ENCODE measurements at regions of chr14 and their contacts with region 1.

Region 1: DNA sequence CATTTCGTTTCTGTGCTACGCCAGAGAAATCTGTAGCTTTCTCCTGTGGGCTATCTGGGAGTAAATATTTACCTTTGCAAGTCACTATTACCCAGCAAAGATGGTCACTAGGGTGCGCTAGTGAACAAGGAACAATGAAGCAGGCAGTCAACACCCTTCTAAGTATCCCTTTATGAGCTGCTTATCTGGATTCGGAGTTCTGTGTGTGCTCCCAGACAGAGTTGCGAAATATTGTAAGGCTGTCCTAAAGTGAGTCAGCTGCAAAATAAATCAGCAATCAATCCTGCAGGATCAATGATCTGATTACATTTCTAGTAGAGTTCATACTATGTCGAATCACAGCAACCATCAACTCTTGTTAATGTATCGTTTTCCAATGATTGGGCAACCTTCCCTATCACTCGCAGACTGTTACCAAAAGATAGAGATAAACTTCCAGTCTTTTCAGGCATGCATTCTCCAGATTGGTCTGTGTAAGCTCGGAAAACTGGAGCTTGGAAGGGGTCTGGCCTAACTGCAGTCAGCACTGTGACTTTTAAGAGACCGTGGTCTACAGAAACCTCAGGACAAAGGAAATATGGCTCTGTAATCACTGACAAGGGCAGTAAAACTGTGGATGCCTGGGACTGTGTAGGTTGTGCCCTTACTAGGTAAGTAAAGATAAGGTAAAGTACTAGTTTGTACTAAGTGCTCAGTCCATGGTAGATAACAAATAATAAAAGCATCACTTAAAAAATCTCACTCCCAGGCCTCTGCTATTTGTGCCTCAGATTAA is 133.5 kb downstream of the KCNK10 start:
- DNase-seq: peak; percentile 77
- H3K4me3 ChIP-seq: no peak overlapping the region
- H3K27ac ChIP-seq: no peak overlapping the region
- H3K4me1 ChIP-seq: no peaks in the 10 kb centered on the region
- H3K27me3 ChIP-seq: no peaks in the 10 kb centered on the region
- CTCF ChIP-seq: peak; percentile 73 to 80

Region 2: GRCh38 chr14:88013750-88014349 is 175.8 kb before region 1 on chr14:
- CTCF ChIA-PET with region 1: no interaction called
- dilution Hi-C with region 1: no loop called
- in situ Hi-C with region 1: no loop called
- intact Hi-C with region 1: loop called (anchors 5 kb)
- DNase-seq: peak; percentile 44
- H3K4me3 ChIP-seq: no peak overlapping the region
- H3K27ac ChIP-seq: no peak overlapping the region
- H3K4me1 ChIP-seq: no peaks in the 10 kb centered on the region
- H3K27me3 ChIP-seq: no peaks in the 10 kb centered on the region
- CTCF ChIP-seq: peak; percentile 85 to 88

Region 3: GRCh38 chr14:88385345-88386101 is 195.9 kb after region 1 on chr14 and contains the start of gene SPATA7:
- CTCF ChIA-PET with region 1: interaction called, 6 read pairs
- dilution Hi-C with region 1: no loop called
- in situ Hi-C with region 1: loop called in 1 of 2 experiments (anchors 25 kb)
- intact Hi-C with region 1: loop called (anchors 1 kb)
- DNase-seq: peak; percentile 81
- H3K4me3 ChIP-seq: peak within 1 kb of the TSS; percentile 83 to 93 (median 86)
- H3K27ac ChIP-seq: peak within 1 kb of the TSS; percentile 70
- H3K4me1 ChIP-seq: peaks cover 11% of the 10 kb centered on the region
- H3K27me3 ChIP-seq: peaks cover 2% of the 10 kb centered on the region
- CTCF ChIP-seq: no peak
- total RNA-seq, gene SPATA7: 7.8 to 16.0 TPM

Region 4: GRCh38 chr14:88492272-88493089 is 302.9 kb after region 1 on chr14:
- CTCF ChIA-PET with region 1: interaction called, 10 read pairs
- dilution Hi-C with region 1: no loop called
- in situ Hi-C with region 1: no loop called
- intact Hi-C with region 1: loop called (anchors 1 kb)
- DNase-seq: peak; percentile 49
- H3K4me3 ChIP-seq: no peak overlapping the region
- H3K27ac ChIP-seq: no peak overlapping the region
- H3K4me1 ChIP-seq: peaks cover 13% of the 10 kb centered on the region
- H3K27me3 ChIP-seq: no peaks in the 10 kb centered on the region
- CTCF ChIP-seq: peak; percentile 84 to 88